Endothelial cell of umbilical vein (primary cell): ENCODE measurements at regions of chr9 and their contacts with region 1.

Region 1: DNA sequence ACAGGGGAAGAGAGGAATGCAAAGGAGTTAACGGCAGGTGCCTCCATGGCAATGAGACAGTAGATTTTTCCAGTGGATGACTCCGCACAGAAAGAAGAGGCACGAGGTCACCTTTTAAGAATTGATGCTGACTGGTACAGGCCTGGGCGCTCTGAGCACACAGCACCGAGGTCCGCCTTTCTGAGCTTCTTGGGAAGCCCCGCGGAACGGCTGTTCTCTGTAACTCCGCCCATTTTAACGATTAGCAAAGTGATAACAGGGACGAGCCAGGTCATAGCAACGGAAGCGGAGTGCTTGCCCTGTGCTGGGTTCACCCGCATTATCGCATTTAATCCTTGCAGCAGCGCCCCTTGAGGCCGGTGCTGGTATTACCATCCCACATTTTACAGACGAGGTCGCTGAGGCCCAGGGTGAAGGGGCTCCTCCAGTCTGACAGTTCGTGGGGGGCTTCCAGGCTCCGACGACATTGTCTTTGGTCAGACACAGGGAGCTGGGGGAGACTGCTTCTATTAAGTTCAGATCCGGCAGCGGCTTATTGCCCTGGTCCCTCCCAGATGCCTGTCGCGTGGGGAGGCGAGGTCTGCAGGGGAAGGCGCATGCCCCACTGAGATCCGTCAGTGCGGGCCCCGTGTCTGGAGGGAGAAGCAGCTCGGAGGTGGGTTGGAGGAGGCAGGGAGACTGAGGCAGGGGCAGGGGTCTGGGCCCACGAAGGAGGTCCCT is 22.4 kb upstream of the HMCN2 start:
- DNase-seq: peak; percentile 35
- H3K4me3 ChIP-seq: no peak overlapping the region
- H3K27ac ChIP-seq: no peak overlapping the region
- H3K4me1 ChIP-seq: no peaks in the 10 kb centered on the region
- H3K27me3 ChIP-seq: no peaks in the 10 kb centered on the region
- CTCF ChIP-seq: peak; percentile 78 to 80
- POLR2A ChIP-seq: no peak

Region 2: DNA sequence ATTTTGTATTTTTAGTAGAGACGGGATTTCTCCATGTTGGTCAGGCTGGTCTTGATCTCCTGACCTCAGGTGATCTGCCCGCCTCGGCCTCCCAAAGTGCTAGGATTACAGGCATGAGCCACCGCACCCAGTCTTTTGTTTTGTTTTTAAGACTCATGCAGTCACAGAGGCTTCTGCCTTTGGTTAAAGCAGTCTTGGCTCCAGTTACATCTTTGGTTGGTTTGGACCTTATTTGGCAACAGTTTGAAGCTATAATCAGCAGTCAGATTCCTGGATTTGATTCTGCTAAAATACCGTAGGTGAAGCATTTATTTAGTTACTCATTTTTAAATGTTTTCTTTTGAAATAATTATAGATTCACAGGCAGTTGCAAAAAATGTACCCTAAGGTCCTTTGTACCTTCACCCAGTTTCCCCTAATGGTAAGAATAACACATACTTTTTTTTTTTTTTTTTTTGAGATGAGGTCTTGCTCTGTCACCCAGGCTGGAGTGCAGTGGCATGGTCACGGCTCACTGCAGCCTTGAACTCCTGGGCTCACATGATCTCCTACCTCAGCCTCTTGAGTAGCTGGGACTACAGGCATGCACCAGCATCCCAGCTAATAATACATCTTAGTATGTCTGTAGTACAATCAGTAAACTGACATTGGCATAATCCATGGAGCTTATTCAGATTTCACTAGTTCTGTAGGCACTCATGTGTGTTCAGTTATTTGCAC is 392.2 kb before region 1 on chr9:
- CTCF ChIA-PET with region 1: no interaction called
- POLR2A ChIA-PET with region 1: no interaction called
- dilution Hi-C with region 1: no loop called
- intact Hi-C with region 1: no loop called
- DNase-seq: no peak
- H3K4me3 ChIP-seq: no peak overlapping the region
- H3K27ac ChIP-seq: no peak overlapping the region
- H3K4me1 ChIP-seq: peaks cover 2% of the 10 kb centered on the region
- H3K27me3 ChIP-seq: no peaks in the 10 kb centered on the region
- CTCF ChIP-seq: no peak
- POLR2A ChIP-seq: no peak

Region 3: GRCh38 chr9:130254752-130255630 is 11.8 kb after region 1 on chr9:
- CTCF ChIA-PET with region 1: interaction called, 11 read pairs
- POLR2A ChIA-PET with region 1: no interaction called
- dilution Hi-C with region 1: no loop called
- intact Hi-C with region 1: no loop called
- DNase-seq: no peak
- H3K4me3 ChIP-seq: no peak overlapping the region
- H3K27ac ChIP-seq: no peak overlapping the region
- H3K4me1 ChIP-seq: no peaks in the 10 kb centered on the region
- H3K27me3 ChIP-seq: peaks cover 5 to 21% of the 10 kb centered on the region in 2 experiments
- CTCF ChIP-seq: no peak
- POLR2A ChIP-seq: no peak